CD8-positive, alpha-beta T cell (primary cell): ENCODE measurements at regions of chr3 and their contacts with region 1.

Region 1: DNA sequence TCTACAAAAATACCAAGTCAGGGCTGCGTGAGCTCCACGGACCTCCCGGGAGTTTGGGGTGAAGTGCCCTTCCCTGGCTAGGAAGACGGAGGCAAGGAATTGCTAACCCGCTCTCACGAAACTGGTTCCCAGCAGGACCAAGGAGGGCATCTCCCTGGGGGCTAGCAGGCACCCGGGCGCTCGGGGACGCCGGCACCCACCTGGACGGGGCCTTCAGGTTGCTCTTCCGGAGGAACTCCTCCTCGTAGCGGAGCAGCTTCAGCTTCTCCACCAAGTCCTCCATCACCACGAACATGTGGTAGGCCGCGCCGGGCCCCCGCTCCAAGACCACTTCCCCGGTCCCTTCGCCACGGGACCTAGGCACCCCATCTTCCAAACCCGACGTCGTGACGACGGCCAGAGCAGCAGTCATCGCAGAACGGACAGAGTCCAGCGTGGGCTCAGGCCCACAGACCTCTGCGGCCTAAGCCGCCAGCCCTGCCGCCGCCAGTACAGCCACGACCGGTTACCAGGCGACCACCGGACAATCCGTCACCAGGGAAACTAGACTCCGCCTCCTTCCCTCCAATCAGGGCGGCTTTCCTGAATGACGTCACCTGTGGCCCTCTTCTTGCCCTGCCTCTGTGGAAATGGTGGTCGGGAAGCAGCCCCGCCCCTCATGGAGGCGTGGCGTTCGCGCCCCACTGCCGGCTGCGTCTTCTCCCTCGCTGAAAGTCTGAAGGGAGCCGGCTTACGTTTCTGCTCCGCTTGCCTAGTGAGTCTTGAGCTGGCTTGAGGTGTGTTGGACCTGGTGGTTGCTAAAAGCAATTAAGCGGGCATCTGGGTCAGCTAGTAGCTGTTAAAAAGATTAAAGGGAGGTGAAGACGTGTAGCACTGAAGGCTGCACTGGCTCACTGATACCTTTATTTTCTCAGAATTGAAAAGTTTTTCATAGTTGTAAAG is at the start of gene IFT57:
- DNase-seq: peak; percentile 89 to 99 (median 95)
- ATAC-seq: peak; percentile 94
- H3K4me3 ChIP-seq: peak within 1 kb of the TSS; percentile 73 to 94
- H3K4me3 Mint-ChIP-seq: peak within 1 kb of the TSS; percentile 97
- H3K27ac ChIP-seq: peak within 1 kb of the TSS; percentile 96 to 97
- H3K27ac Mint-ChIP-seq: peak within 1 kb of the TSS; percentile 98
- H3K4me1 ChIP-seq: peaks cover 41% of the 10 kb centered on the region
- H3K4me1 Mint-ChIP-seq: peaks cover 53% of the 10 kb centered on the region
- H3K27me3 ChIP-seq: no peaks in the 10 kb centered on the region
- H3K27me3 Mint-ChIP-seq: no peaks in the 10 kb centered on the region
- CTCF ChIP-seq: no peak
- total RNA-seq, gene IFT57: 45.2 to 55.7 TPM

Region 2: DNA sequence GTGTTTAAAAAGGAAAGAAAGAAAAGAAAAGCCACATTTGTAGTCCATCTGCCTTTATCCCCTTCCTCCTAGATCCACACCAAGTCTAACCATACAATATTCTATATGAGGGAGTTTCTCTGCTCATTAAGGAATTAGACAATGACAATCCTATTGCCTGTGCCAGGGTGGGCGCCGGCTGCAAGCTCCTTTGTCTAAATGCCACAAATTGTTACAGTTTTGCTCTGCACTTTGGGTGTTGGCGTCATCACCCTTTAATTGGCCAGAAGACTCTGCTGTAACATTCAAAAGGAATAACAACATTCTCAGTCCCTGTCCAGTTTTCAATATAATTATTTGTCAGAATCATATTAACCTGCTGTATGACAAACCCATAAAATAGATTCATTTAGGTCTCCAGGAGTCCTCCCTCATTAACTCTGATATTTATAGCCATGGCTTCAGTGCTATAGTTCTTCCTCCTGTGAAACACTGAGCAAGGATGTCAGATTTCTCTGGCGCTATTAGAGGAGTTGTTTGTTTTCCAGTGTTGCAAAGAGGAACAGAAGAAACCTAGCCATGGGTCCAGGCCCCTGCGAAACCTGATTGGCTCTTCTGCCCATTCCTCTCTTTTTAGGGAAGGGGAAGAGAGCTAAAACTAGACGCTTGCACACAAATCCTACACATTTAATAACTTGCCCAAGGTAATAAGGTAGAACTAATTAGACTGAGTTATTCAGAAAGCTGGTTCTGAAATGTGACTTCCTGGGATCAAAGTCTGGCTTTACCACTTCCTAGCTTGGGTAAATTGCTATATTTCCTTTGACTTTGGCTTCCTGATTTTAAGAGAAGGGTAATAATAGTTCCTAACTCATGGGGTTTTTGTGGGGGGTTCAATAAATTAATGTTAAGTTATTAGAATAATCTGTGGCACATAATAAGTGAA is 243.8 kb before region 1 on chr3:
- CTCF ChIA-PET with region 1: no interaction called
- POLR2A ChIA-PET with region 1: no interaction called
- intact Hi-C with region 1: loop called in 1 of 2 experiments (anchors 5 kb)
- DNase-seq: peak in 1 of 9 experiments; percentile 28
- ATAC-seq: peak; percentile 31
- H3K4me3 ChIP-seq: peak overlapping the region in 1 of 2 experiments; percentile 26
- H3K4me3 Mint-ChIP-seq: peak overlapping the region; percentile 48
- H3K27ac ChIP-seq: no peak overlapping the region
- H3K27ac Mint-ChIP-seq: peak overlapping the region; percentile 4
- H3K4me1 ChIP-seq: peaks cover 51% of the 10 kb centered on the region
- H3K4me1 Mint-ChIP-seq: peaks cover 74% of the 10 kb centered on the region
- H3K27me3 ChIP-seq: no peaks in the 10 kb centered on the region
- H3K27me3 Mint-ChIP-seq: no peaks in the 10 kb centered on the region
- CTCF ChIP-seq: no peak

Region 3: GRCh38 chr3:108022256-108023097 is 199.7 kb before region 1 on chr3:
- CTCF ChIA-PET with region 1: no interaction called
- POLR2A ChIA-PET with region 1: no interaction called
- intact Hi-C with region 1: no loop called
- DNase-seq: no peak
- ATAC-seq: no peak
- H3K4me3 ChIP-seq: no peak overlapping the region
- H3K4me3 Mint-ChIP-seq: no peak overlapping the region
- H3K27ac ChIP-seq: no peak overlapping the region
- H3K27ac Mint-ChIP-seq: no peak overlapping the region
- H3K4me1 ChIP-seq: no peaks in the 10 kb centered on the region
- H3K4me1 Mint-ChIP-seq: peaks cover 5% of the 10 kb centered on the region
- H3K27me3 ChIP-seq: no peaks in the 10 kb centered on the region
- H3K27me3 Mint-ChIP-seq: no peaks in the 10 kb centered on the region
- CTCF ChIP-seq: no peak

Region 4: GRCh38 chr3:108124337-108125152 is 97.6 kb before region 1 on chr3:
- CTCF ChIA-PET with region 1: interaction called, 13 read pairs
- POLR2A ChIA-PET with region 1: interaction called, 15 read pairs
- intact Hi-C with region 1: loop called (anchors 1 to 2 kb)
- DNase-seq: peak; percentile 15 to 91 (median 57)
- ATAC-seq: peak; percentile 59
- H3K4me3 ChIP-seq: peak overlapping the region; percentile 41 to 55
- H3K4me3 Mint-ChIP-seq: peak overlapping the region; percentile 84
- H3K27ac ChIP-seq: peak overlapping the region; percentile 78 to 85
- H3K27ac Mint-ChIP-seq: peak overlapping the region; percentile 99
- H3K4me1 ChIP-seq: peaks cover 64% of the 10 kb centered on the region
- H3K4me1 Mint-ChIP-seq: peaks cover 65% of the 10 kb centered on the region
- H3K27me3 ChIP-seq: no peaks in the 10 kb centered on the region
- H3K27me3 Mint-ChIP-seq: no peaks in the 10 kb centered on the region
- CTCF ChIP-seq: no peak

Region 5: GRCh38 chr3:108322352-108322751 is 100.2 kb after region 1 on chr3:
- CTCF ChIA-PET with region 1: no interaction called
- POLR2A ChIA-PET with region 1: no interaction called
- intact Hi-C with region 1: loop called in 1 of 2 experiments (anchors 1 kb)
- DNase-seq: peak in 6 of 9 experiments; percentile 2 to 53 (median 32)
- ATAC-seq: no peak
- H3K4me3 ChIP-seq: no peak overlapping the region
- H3K4me3 Mint-ChIP-seq: no peak overlapping the region
- H3K27ac ChIP-seq: no peak overlapping the region
- H3K27ac Mint-ChIP-seq: no peak overlapping the region
- H3K4me1 ChIP-seq: no peaks in the 10 kb centered on the region
- H3K4me1 Mint-ChIP-seq: no peaks in the 10 kb centered on the region
- H3K27me3 ChIP-seq: no peaks in the 10 kb centered on the region
- H3K27me3 Mint-ChIP-seq: no peaks in the 10 kb centered on the region
- CTCF ChIP-seq: no peak

Region 6: GRCh38 chr3:108489771-108490170 is 267.6 kb after region 1 on chr3:
- CTCF ChIA-PET with region 1: no interaction called
- POLR2A ChIA-PET with region 1: no interaction called
- intact Hi-C with region 1: loop called in 1 of 2 experiments (anchors 10 kb)
- DNase-seq: peak in 7 of 9 experiments; percentile 7 to 80 (median 37)
- ATAC-seq: peak; percentile 93
- H3K4me3 ChIP-seq: no peak overlapping the region
- H3K4me3 Mint-ChIP-seq: no peak overlapping the region
- H3K27ac ChIP-seq: no peak overlapping the region
- H3K27ac Mint-ChIP-seq: no peak overlapping the region
- H3K4me1 ChIP-seq: no peaks in the 10 kb centered on the region
- H3K4me1 Mint-ChIP-seq: peaks cover 3% of the 10 kb centered on the region
- H3K27me3 ChIP-seq: peaks cover 0 to 2% of the 10 kb centered on the region in 2 experiments
- H3K27me3 Mint-ChIP-seq: peaks cover 3% of the 10 kb centered on the region
- CTCF ChIP-seq: peak; percentile 85

Region 7: DNA sequence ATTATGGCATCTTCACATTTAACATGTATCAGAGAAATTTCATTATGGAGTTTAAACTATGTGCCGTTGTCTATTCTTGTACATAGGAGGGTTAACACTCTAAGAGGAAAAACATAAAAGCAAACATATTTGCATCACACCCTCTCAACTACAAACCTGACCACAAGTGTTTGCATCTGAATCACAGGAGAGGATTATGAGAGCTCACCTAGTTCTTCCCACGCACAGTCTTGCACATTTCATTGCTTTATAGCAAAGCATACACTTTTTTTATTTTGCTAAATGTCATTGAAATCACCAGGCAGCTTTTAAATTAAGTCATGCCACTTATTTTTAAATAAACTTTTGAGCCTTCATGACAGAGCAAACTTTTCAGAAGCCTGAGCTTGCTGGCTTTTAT is 612.9 kb after region 1 on chr3:
- CTCF ChIA-PET with region 1: no interaction called
- POLR2A ChIA-PET with region 1: no interaction called
- intact Hi-C with region 1: loop called in 1 of 2 experiments (anchors 10 kb)
- DNase-seq: peak in 4 of 9 experiments; percentile 36 to 78 (median 60)
- ATAC-seq: peak; percentile 90
- H3K4me3 ChIP-seq: no peak overlapping the region
- H3K4me3 Mint-ChIP-seq: peak overlapping the region; percentile 66
- H3K27ac ChIP-seq: peak overlapping the region; percentile 13 to 43
- H3K27ac Mint-ChIP-seq: peak overlapping the region; percentile 90
- H3K4me1 ChIP-seq: peaks cover 60% of the 10 kb centered on the region
- H3K4me1 Mint-ChIP-seq: peaks cover 84% of the 10 kb centered on the region
- H3K27me3 ChIP-seq: no peaks in the 10 kb centered on the region
- H3K27me3 Mint-ChIP-seq: no peaks in the 10 kb centered on the region
- CTCF ChIP-seq: no peak